Motor neuron (in vitro differentiated cells): ENCODE measurements at regions of chr6 and their contacts with region 1.

Region 1: DNA sequence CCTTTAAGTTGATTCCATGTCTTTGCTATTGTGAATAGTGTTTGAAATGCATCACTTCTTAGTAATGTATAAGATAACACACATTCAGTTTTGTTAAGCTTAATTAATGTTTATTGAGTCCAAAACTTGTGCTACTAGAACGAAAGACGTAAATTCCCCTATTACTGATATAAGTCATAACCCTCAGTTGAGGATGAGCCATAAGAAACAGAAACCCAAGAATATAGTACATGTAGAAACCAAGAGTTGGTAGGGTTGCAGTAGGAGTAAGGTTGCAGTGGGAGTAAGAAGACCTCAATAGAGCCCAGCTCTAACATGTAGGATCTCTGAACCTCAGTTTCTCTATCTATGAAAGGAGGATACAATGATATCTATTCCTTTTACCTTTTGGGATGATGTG is 19.3 kb downstream of the CITED2 start:
- ATAC-seq: no peak
- H3K4me3 ChIP-seq: no peak overlapping the region
- H3K27ac ChIP-seq: no peak overlapping the region
- H3K4me1 ChIP-seq: no peaks in the 10 kb centered on the region

Region 2: GRCh38 chr6:139219746-139220145 is 135.4 kb before region 1 on chr6:
- in situ Hi-C with region 1: loop called in 3 of 9 experiments (anchors 10 kb)
- ATAC-seq: no peak
- H3K4me3 ChIP-seq: no peak overlapping the region
- H3K27ac ChIP-seq: no peak overlapping the region
- H3K4me1 ChIP-seq: no peaks in the 10 kb centered on the region